Activated CD4-positive, alpha-beta memory T cell treated with anti-CD3 and anti-CD28 coated beads, Interleukin-2, amount 10 ng/mL, durations not matched to agents 7 days and 5 days (primary cell): ENCODE measurements at regions of chr17 and their contacts with region 1.

Region 1: DNA sequence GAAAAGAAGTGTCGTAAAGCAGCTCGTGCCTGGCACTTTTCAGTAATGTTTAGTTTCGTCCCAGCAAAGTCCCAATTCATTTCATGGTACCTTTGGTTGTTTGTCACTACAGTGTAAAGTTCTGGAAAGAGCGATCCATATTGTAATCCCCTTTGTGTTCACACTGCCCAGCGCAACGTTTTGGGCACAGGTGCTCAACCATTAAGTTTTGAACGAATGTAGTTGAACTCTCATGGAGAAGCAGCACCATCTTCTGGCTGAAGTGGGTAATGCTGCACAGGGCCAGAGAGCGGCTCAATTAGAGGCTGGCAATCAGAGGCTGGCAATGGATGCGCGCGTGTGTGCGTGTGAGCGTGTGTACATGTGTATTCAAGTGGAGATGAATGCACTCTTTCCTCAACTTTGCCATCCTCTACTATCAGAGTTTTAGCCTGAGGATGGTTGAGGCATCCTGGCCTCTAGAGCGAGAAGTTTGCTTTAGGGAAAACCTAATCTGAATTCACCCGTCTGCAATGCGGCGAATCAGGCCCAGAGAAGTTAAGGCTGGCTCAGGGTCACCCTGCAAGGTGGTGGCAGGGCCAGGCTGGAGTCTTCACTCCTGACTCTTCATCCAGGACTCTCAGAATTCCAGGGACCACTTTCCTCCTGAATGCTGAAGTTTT is 29.9 kb downstream of the DYNLL2 start:
- DNase-seq: peak; percentile 86
- H3K4me3 Mint-ChIP-seq: no peak overlapping the region
- H3K27ac Mint-ChIP-seq: no peak overlapping the region
- H3K4me1 Mint-ChIP-seq: no peaks in the 10 kb centered on the region
- H3K27me3 Mint-ChIP-seq: peaks cover 10% of the 10 kb centered on the region

Region 2: DNA sequence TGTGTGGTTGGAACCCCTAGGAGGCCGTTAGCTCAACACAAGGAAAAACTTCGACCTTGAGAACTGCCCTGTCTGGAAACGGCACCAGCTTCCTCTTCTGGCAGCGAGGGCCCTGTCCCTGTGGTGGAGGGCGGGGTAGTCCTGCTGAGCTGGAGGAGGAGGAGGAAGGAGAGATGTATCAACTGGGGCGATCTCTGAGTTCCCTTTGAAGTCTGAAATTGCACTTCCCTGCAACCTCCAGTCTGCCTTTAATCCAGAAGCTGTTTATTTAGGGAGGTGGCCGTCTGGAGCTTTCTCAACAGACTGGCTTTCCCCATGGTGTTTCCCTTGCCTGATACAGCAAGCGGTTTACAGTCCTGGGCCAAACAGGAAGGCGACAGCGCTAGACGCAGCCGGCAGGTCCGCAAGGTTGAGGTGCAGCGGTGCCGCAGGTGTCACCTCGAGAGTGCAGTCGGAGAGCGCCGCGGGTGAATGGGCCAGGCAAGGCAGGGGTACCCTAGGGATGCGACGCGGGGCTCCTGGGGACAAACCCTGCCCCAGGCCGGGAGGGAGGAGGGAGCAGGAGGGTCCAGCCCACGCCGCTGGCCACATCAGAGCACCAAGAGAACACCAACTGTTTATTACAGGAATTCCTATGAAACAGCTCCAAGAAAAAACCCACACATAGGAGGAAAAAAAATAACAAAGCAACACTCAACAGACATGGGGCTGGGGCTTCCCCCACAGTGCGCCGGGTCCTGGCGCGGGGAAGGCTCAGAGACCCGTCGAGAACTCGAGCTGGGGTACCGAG is 251.9 kb before region 1 on chr17:
- CTCF ChIA-PET with region 1: interaction called, 32 read pairs
- POLR2A ChIA-PET with region 1: no interaction called
- DNase-seq: peak; percentile 37
- H3K4me3 Mint-ChIP-seq: peak overlapping the region; percentile 54
- H3K27ac Mint-ChIP-seq: no peak overlapping the region
- H3K4me1 Mint-ChIP-seq: peaks cover 12% of the 10 kb centered on the region
- H3K27me3 Mint-ChIP-seq: peaks cover 45% of the 10 kb centered on the region

Region 3: DNA sequence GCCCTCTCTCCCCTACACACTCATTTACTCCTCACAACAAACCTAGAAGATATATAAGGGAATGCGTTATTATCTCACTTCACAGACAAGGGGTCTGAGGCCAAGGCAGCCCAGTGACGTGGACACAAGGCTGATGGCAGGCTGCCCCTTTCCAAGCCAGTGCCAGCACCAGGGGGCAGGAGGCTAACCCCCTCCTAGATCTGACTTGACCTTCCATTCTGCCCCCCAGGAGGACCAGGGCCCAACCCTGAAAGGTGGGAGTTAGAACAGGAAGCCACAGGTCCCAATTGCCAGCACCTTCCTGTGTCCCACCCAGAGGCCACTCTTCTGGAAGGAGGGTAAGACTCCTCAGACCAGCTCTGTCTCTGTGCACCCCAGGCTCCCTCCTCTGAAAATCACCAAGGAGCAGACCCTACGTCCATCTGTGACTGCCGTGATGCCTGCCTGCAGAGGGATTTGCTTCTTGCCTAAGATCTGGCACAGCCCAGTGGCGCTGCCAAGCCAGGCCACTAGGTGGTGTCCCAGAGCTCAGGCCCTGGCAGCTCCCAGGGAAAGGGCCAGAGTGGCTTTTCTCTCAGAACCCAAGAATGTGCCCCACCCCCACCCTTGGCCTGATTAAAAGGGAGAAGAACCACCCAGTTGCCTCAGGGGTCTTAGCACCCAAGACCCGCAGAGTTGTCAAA is 220.8 kb before region 1 on chr17:
- CTCF ChIA-PET with region 1: interaction called, 10 read pairs
- POLR2A ChIA-PET with region 1: no interaction called
- DNase-seq: peak; percentile 84
- H3K4me3 Mint-ChIP-seq: no peak overlapping the region
- H3K27ac Mint-ChIP-seq: no peak overlapping the region
- H3K4me1 Mint-ChIP-seq: peaks cover 11% of the 10 kb centered on the region
- H3K27me3 Mint-ChIP-seq: peaks cover 8% of the 10 kb centered on the region

Region 4: GRCh38 chr17:58092797-58093385 is 20.2 kb before region 1 on chr17:
- CTCF ChIA-PET with region 1: no interaction called
- POLR2A ChIA-PET with region 1: no interaction called
- DNase-seq: no peak
- H3K4me3 Mint-ChIP-seq: no peak overlapping the region
- H3K27ac Mint-ChIP-seq: no peak overlapping the region
- H3K4me1 Mint-ChIP-seq: peaks cover 13% of the 10 kb centered on the region
- H3K27me3 Mint-ChIP-seq: no peaks in the 10 kb centered on the region